Tibial artery (tissue), 4 donors: ENCODE measurements at regions of chr4 and their contacts with region 1.

Region 1: DNA sequence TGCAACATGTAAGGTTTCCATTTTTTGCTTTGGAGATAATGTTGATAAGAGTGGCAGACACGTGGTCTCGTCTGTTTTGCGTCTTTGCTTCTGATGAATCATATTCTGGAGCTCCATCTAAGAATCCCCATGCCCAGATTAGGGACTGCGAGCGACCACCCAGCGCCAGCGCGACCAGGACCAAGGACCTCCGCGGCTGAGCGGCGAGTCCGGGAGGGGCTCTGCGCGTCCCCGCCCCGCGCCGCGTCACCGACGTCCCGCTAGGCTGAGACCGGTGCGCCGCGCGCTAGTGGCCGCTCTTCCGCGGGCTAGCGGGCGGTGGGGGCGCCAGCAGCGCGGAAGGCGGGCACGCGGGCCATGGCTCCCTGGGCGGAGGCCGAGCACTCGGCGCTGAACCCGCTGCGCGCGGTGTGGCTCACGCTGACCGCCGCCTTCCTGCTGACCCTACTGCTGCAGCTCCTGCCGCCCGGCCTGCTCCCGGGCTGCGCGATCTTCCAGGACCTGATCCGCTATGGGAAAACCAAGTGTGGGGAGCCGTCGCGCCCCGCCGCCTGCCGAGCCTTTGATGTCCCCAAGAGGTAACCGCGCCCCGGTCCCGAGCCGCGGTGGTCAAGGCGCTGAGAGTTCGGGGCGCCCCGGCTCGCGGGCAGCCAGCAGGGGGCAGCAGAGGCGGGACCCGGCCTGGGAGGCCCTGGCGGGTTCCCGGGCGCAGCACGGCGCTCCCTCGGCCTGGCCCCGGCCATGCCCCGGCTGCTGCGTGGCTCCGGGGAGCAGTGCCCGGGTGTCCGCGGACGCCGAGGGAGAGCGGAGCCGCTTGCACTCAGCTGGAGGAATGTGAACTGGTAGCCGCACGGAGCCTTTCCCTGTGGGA is at the start of gene SRD5A3:
- DNase-seq: peak; percentile 69 to 89
- H3K4me3 ChIP-seq: peak within 1 kb of the TSS; percentile 71 to 79
- H3K27ac ChIP-seq: peak within 1 kb of the TSS; percentile 90 to 95
- H3K4me1 ChIP-seq: peaks cover 0 to 14% (median 13%) of the 10 kb centered on the region in 4 donors
- H3K27me3 ChIP-seq: no peaks in the 10 kb centered on the region
- CTCF ChIP-seq: peak; percentile 92 to 93

Region 2: DNA sequence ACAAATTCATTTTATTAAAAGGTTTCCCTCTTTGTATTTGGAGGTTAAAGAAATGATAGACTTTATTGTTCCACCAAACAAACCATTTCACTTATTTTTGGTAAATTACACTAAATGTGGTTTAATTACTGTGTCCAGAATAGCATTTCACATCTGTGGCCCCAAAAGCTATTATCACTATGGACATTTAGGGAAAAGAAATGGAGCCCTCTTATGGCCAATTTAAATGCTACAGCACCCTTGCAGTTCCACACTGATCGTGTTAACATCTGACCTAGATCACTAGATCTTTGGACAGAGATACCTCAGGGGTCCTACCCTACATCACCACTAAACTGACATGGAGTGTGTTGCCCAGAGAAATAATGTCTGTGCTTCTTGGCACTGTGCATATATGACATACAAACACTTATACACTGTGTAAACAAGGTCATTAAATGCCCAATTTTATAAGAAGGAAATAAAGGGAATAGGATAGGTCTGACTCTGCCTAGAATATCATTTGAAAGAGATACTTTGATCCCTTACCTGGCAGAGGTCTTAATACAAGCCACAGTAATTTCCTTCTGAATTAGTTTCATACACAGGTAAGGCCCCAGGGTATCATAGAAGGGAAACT is 384.7 kb before region 1 on chr4:
- intact Hi-C with region 1: no loop called
- DNase-seq: no peak
- H3K4me3 ChIP-seq: no peak overlapping the region
- H3K27ac ChIP-seq: no peak overlapping the region
- H3K4me1 ChIP-seq: no peaks in the 10 kb centered on the region
- H3K27me3 ChIP-seq: no peaks in the 10 kb centered on the region
- CTCF ChIP-seq: peak; percentile 54 to 62

Region 3: GRCh38 chr4:55395529-55396307 is 49.5 kb after region 1 on chr4 and contains the start of gene TMEM165:
- intact Hi-C with region 1: loop called (anchors 5 kb)
- DNase-seq: peak; percentile 88 to 95
- H3K4me3 ChIP-seq: peak within 1 kb of the TSS; percentile 74 to 98
- H3K27ac ChIP-seq: peak within 1 kb of the TSS; percentile 98 to 99
- H3K4me1 ChIP-seq: peaks cover 0 to 37% (median 18%) of the 10 kb centered on the region in 4 donors
- H3K27me3 ChIP-seq: no peaks in the 10 kb centered on the region
- CTCF ChIP-seq: no peak

Region 4: GRCh38 chr4:55546756-55547465 is 200.7 kb after region 1 on chr4 and contains the start of gene CLOCK:
- intact Hi-C with region 1: loop called (anchors 5 kb)
- DNase-seq: peak; percentile 79 to 90
- H3K4me3 ChIP-seq: peak within 1 kb of the TSS; percentile 61 to 98
- H3K27ac ChIP-seq: peak within 1 kb of the TSS; percentile 88 to 100
- H3K4me1 ChIP-seq: peaks cover 0 to 19% (median 6%) of the 10 kb centered on the region in 4 donors
- H3K27me3 ChIP-seq: no peaks in the 10 kb centered on the region
- CTCF ChIP-seq: peak; percentile 58

Region 5: DNA sequence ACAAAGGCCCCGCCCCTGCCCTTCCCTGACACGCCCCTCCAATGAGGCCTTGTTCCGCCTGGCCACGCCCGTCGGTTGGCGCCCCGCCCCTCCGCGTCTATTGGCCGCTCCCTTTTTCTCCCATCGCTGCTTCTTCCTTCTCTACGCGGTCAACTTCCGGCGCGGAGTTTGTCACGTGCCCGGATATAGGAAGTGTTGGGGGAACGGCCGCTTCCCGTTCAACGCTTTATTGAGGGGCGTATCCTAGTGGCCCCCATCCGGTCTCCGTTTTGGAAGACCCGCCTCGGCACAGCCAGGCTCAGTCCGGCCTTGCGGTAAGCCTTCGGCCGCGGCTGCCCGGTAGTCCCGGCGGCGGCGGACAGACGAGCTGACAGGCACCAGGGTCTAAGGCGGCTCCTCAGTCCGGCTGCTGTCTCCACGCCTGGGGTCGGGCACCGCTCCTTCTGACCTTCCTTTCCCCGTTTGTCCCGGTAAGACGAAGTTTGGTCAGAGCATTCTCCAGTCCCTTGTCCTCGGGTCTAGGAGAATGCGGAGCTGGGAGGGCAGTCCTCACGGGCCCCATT is 507.4 kb after region 1 on chr4 and contains the start of gene EXOC1:
- intact Hi-C with region 1: loop called (anchors 10 kb)
- DNase-seq: peak; percentile 99
- H3K4me3 ChIP-seq: peak within 1 kb of the TSS; percentile 87 to 95
- H3K27ac ChIP-seq: peak within 1 kb of the TSS; percentile 89 to 92
- H3K4me1 ChIP-seq: peaks cover 0 to 18% (median 9%) of the 10 kb centered on the region in 4 donors
- H3K27me3 ChIP-seq: peaks cover 0 to 2% of the 10 kb centered on the region in 2 donors
- CTCF ChIP-seq: no peak